AG04449 (cell line): ENCODE measurements at regions of chr1 and their contacts with region 1.

Region 1: DNA sequence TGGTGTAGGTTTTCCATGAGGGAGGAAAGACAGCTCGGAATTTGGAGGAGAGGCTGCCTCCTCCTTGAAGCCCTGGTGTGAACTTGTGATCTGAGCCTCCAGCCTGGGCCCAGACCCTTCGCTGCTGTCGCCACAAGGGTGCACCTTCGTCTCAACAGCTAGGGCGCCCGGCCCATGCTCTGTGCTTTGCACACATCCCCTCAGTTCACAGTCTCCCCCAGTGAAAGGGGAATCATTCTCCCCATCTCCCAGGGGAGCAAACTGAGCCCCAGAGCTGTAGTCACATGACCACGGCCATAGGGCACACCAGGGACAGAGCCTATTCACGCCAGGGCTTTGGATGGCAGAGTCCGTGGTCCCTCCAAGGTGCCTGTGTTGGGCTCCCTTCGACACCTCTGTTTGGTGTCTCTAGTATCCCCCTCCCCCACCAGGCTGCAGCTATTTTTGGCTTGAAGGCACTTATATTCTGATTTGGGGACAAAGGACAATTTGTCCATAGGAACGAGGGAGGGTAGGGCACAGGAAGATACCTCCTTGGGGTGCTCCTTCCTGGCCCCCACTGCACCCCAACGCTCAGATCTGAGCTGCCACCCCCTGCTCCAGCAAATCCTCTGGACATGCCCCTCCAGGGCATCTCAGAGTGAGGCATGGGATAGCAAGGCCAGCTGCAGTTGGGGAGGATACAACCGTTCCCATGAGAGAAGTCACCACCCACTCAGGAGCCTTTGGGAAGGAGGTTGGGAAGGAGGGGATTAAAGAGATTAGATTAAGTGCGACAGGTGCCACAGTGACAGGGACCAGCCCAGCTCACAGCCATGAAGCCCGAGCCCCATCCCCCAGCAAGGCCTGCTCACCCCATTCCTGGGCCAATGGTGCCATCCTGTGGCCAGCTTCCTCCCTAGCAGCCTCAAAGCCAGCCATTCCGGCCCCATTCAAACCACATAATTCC is 15.7 kb downstream of the MATN1 start:
- DNase-seq: no peak
- H3K4me3 ChIP-seq: no peak overlapping the region
- CTCF ChIP-seq: peak; percentile 89

Region 2: DNA sequence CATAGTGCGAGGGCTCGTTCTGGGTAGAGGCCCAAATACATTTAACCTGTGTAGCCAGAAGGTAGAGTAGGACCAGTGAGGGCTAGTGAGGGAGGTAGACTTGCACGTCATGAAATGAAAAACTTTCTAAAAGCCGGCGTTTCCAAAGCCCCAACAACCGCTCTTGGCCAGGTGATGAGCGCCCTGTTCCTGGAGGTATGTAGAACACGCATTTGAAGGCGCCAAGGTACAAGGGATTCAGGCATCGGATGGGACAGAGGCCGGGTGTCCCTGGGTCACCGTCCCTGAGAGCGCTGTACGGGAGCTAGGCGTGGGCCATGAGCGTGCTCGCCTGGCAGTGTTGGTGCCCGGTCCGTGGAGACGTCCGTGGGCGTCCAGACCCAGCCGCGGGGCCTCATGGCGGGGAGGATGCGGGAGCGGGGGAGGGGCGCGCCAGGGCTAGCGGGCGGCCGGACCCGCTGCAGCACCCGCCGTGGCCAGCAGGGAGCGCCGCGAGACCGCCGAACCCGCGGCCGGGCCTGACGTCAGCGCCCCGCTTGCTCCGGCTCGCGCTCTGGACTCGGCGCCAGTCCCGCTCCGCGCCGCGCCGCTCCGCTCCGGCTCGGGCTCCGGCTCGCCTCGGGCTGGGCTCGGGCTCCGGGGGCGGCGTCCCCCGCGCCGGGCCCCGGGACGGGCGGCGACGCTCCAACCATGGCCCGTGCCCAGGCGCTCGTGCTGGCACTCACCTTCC is 1471.6 kb before region 1 on chr1 and contains the start of gene PTPRU:
- CTCF ChIA-PET with region 1: interaction called, 16 read pairs
- POLR2A ChIA-PET with region 1: no interaction called
- DNase-seq: no peak
- H3K4me3 ChIP-seq: peak within 1 kb of the TSS; percentile 68
- CTCF ChIP-seq: peak; percentile 74

Region 3: GRCh38 chr1:29513357-29513756 is 1194.3 kb before region 1 on chr1:
- CTCF ChIA-PET with region 1: interaction called, 12 read pairs
- POLR2A ChIA-PET with region 1: no interaction called
- DNase-seq: peak; percentile 10
- H3K4me3 ChIP-seq: no peak overlapping the region
- CTCF ChIP-seq: peak; percentile 65

Region 4: DNA sequence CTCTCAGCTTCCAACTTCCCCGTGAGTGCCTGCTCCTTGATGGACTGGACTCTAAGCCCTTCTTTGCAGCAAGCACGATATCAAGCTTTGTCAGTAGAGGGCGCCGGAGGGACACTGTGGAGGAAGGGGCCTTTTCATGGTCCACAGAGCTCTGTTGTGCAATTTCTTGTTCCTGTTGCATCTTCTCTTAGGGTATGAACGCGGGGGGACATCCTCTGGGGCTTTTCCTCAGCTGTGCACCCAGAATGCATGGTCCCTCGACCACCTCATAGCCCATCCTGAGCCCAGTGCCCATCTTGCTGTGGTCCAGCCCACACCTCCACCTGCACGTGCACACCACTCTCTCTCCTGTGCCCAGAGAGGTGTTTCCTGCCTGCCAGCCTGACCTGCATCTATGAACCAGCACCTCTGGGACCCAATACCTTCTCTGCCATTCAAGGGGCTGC is 914.6 kb before region 1 on chr1:
- CTCF ChIA-PET with region 1: interaction called, 12 read pairs
- POLR2A ChIA-PET with region 1: no interaction called
- DNase-seq: peak; percentile 36
- H3K4me3 ChIP-seq: no peak overlapping the region
- CTCF ChIP-seq: peak; percentile 90

Region 5: GRCh38 chr1:30450818-30451233 is 256.9 kb before region 1 on chr1:
- CTCF ChIA-PET with region 1: interaction called, 15 read pairs
- POLR2A ChIA-PET with region 1: no interaction called
- DNase-seq: no peak
- H3K4me3 ChIP-seq: no peak overlapping the region
- CTCF ChIP-seq: no peak

Region 6: DNA sequence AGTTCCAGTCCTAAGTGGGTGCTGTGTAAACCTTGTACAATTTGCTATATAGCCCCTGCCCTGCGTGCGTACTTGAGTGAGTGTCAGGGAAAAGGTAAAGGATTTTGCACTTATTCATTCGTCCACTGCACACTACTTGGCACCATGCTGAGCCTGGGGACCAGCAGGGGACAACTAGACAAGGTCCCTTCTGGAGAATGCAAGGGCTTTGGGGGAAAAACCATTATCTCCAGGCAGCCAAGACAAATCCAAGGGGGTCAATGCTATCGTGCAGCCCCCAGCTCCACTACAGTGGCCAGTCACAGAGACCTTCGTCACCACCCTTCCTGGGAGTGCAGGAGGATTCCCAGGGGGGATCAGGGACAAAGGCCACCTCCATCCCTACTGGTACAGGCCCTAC is 24.0 kb before region 1 on chr1:
- CTCF ChIA-PET with region 1: no interaction called
- POLR2A ChIA-PET with region 1: no interaction called
- DNase-seq: no peak
- H3K4me3 ChIP-seq: no peak overlapping the region
- CTCF ChIP-seq: no peak